ENCODE measurements at regions of chr17 and their contacts with region 1.

Region 1: DNA sequence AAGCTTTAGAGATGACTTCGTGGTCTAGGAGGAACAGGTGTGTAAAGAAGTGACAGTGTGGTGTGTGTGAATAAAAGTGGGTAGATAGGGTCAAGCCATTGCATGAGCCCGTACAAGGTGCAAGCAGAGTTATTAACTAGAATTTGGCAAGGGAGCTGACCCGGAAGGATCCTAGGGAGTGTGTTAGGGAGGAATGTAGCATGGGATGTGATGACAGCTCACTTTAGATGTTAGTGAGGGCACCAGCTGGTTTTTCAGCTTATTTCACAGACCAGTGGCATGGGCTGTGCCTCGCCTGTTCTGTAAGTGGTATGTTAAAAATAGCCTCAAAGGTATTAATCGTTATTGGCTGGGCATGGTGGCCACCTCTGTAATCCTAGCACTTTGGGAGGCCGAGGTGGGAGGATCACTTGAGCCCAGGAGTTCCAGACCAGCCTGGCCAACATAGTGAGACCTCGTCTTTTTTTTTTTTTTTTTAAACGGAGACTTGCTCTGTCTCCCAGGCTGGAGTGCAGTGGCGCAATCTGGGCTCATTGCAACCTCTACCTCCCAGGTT is 8.3 kb downstream of the ANKRD40CL start:
- DNase-seq: no peak
- ATAC-seq: peak in 3 of 4 donors; percentile 10 to 12 (median 10)
- H3K4me3 ChIP-seq: no peak overlapping the region
- H3K27ac ChIP-seq: no peak overlapping the region
- H3K4me1 ChIP-seq: no peaks in the 10 kb centered on the region
- H3K27me3 ChIP-seq: no peaks in the 10 kb centered on the region
- CTCF ChIP-seq: no peak

Region 2: GRCh38 chr17:50660042-50660847 is 98.8 kb before region 1 on chr17:
- intact Hi-C with region 1: no loop called
- DNase-seq: no peak
- ATAC-seq: peak; percentile 25 to 49 (median 38)
- H3K4me3 ChIP-seq: no peak overlapping the region
- H3K27ac ChIP-seq: no peak overlapping the region
- H3K4me1 ChIP-seq: peaks cover 21% of the 10 kb centered on the region
- H3K27me3 ChIP-seq: no peaks in the 10 kb centered on the region
- CTCF ChIP-seq: no peak

Region 3: DNA sequence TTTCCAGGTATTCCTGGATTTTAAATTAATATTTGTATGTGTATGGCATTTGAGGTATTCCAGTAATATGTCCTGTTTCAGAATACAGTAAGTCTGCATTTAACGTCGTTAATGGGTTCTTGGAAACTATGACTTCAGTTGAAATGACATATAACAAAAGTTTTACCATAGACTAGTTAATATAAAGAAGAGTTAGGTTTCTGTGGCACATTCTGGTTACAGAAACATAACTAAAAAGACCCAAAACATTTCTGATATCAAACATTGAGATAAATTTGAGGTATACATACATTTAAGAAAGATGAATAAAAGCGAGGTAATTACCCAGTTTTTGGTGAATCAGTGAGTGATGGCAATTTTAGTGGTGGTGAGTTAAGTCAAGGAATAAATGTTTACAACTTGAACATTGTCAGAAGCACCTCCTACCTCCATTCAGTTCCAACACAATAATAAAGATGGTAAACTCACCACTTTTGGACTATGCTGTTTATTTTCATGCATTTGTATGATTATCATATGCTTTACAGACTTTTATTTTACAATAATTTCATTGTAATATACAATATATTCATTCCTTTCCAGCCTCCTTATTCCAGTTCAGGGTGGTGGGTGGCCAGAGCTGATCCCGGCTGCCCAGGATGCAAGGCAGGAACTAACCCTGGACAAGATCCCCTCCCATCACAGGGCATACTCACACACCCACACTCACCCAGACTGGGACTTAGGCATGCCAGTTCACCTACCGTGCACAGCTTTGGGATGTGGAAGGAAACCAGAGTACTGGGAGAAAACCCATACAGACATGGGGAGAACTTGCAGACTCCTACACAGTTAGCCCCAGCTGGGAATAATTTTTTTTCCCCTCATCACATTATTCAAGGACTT is 29.9 kb before region 1 on chr17:
- intact Hi-C with region 1: no loop called
- DNase-seq: no peak
- ATAC-seq: no peak
- H3K4me3 ChIP-seq: no peak overlapping the region
- H3K27ac ChIP-seq: peak overlapping the region; percentile 21
- H3K4me1 ChIP-seq: peaks cover 68% of the 10 kb centered on the region
- H3K27me3 ChIP-seq: no peaks in the 10 kb centered on the region
- CTCF ChIP-seq: no peak

Region 4: DNA sequence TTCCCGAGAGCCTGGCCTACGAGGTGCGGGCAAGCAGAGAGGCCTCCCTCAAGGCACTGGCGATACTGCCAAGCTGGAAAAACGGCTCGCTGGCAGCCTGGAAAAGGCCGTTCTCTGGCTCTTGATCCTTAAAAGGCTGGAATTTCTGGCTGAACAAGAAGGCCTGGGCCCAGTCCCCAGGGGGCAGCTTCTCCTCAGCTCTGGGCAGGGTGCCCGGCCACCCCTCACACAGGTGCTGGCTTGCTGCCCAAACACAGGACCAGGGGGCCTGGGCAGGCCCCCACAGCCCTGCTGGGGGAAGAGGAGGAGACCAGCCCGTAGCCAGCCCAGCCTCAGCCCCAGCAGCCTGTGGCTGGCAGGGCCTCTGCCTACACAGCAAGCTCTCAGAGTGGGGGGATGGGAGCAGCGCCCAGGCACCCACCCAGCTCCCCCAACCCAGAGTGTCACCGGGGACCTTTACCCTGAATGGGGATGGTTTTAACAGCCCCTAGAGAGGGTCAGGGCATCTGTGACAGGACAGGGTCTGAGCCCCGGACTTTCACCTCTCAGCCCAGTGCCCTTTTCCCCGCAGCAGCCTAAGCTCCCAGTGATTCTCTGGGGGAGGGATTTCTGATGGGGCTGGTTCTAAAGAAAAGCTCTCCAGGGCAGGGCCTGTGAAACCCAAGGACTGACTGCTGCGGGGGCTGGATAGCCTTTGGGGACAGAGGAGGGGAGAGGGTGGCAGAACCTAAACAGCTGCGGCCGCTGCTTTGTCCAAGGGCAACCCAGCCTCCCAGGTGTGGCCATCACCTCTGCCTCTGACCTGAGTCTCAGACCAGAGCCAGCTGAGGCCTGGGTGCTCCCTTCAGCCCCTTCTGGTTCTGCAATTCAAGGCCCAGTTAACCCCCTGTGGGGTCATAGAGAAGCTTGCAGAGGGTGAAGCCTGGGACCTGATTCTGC is 145.7 kb after region 1 on chr17:
- intact Hi-C with region 1: no loop called
- DNase-seq: peak; percentile 41 to 68
- ATAC-seq: peak; percentile 50 to 72 (median 64)
- H3K4me3 ChIP-seq: peak overlapping the region; percentile 41
- H3K27ac ChIP-seq: peak overlapping the region; percentile 94
- H3K4me1 ChIP-seq: peaks cover 34% of the 10 kb centered on the region
- H3K27me3 ChIP-seq: no peaks in the 10 kb centered on the region
- CTCF ChIP-seq: no peak

Region 5: GRCh38 chr17:50949989-50950881 is 191.2 kb after region 1 on chr17:
- intact Hi-C with region 1: no loop called
- DNase-seq: peak; percentile 86 to 93
- ATAC-seq: peak; percentile 63 to 78 (median 73)
- H3K4me3 ChIP-seq: peak overlapping the region; percentile 48
- H3K27ac ChIP-seq: peak overlapping the region; percentile 98
- H3K4me1 ChIP-seq: peaks cover 90% of the 10 kb centered on the region
- H3K27me3 ChIP-seq: no peaks in the 10 kb centered on the region
- CTCF ChIP-seq: peak; percentile 78

Region 6: GRCh38 chr17:50976951-50977472 is 217.9 kb after region 1 on chr17:
- intact Hi-C with region 1: loop called (anchors 10 kb)
- DNase-seq: no peak
- ATAC-seq: no peak
- H3K4me3 ChIP-seq: no peak overlapping the region
- H3K27ac ChIP-seq: no peak overlapping the region
- H3K4me1 ChIP-seq: no peaks in the 10 kb centered on the region
- H3K27me3 ChIP-seq: no peaks in the 10 kb centered on the region
- CTCF ChIP-seq: no peak

Region 7: GRCh38 chr17:50986989-50987660 is 228.1 kb after region 1 on chr17:
- intact Hi-C with region 1: loop called in 1 of 2 experiments (anchors 10 kb)
- DNase-seq: no peak
- ATAC-seq: peak in 1 of 4 donors; percentile 25
- H3K4me3 ChIP-seq: no peak overlapping the region
- H3K27ac ChIP-seq: no peak overlapping the region
- H3K4me1 ChIP-seq: no peaks in the 10 kb centered on the region
- H3K27me3 ChIP-seq: no peaks in the 10 kb centered on the region
- CTCF ChIP-seq: no peak